ENCODE measurements at regions of chr1 and their contacts with region 1.

Region 1: GRCh38 chr1:42913426-42914091 is 45.1 kb downstream of the SLC2A1 start:
- DNase-seq: peak; percentile 37
- H3K4me3 ChIP-seq: no peak overlapping the region
- CTCF ChIP-seq: peak; percentile 81

Region 2: DNA sequence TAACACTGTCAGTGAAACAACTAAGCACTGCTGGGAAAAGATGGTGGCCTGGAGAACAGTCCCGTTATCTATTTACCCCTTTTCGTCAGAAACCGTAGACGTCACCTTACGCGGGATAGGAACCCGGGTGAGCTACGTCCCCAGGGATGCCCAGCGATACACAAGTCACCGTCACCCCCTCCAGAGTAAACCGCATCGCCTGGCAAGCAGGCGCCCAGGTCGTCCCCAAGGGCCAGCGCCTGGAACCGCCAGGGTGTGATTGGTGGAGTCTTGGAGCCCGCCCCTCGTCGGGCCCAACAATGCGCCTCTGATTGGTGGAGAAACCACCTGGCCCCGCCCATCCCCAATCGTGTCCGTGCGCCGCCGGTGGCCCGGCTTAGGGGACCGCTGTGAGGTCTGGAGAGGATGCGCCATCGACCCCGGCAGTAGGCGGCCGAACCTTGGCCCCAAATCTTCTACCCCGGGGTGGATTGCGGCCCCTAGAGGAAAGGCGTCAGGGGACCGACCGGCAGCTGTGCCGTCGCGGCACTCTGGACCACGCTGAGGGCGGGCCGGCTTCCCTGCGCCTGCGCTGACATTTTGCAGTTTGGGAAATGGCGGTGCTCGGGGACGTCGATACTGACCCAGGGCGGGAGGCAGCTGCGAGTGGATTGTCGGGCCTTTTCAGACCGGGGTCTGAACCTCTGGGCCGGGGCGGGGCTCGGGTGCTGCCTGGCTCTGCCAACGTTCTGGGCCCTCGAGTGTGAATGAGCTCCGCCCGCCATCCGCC is 10.7 kb after region 1 on chr1:
- CTCF ChIA-PET with region 1: interaction called, 51 read pairs
- POLR2A ChIA-PET with region 1: no interaction called
- DNase-seq: peak; percentile 24
- H3K4me3 ChIP-seq: peak overlapping the region; percentile 66
- CTCF ChIP-seq: peak; percentile 7

Region 3: GRCh38 chr1:43065191-43065590 is 151.6 kb after region 1 on chr1:
- CTCF ChIA-PET with region 1: interaction called, 927 read pairs
- POLR2A ChIA-PET with region 1: no interaction called
- DNase-seq: no peak
- H3K4me3 ChIP-seq: no peak overlapping the region
- CTCF ChIP-seq: no peak

Region 4: DNA sequence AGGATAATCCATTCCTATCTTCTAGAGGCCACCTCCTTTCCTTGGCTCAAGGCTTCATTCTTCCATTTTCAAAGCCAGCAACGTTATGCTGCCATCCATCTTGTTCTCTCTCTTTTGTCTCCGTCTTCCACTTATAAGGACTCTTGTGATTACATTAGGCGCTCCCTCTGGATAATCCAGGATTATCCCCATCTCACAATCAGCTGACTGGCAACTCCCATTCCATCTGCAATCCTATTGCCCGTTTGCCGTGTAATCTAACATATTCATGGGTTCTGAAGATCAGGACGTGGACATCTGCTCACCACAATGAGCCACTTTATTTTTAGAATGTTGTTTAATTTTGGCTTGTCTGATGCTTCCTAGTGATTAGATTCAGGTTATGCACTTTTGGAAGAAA is 169.2 kb after region 1 on chr1:
- CTCF ChIA-PET with region 1: interaction called, 927 read pairs
- POLR2A ChIA-PET with region 1: no interaction called
- DNase-seq: no peak
- H3K4me3 ChIP-seq: no peak overlapping the region
- CTCF ChIP-seq: no peak

Measured in AG04449 (cell line).